ENCODE measurements at regions of chr22 and their contacts with region 1.

Region 1: GRCh38 chr22:43053176-43053575 is 36.0 kb downstream of the TTLL1 start:
- DNase-seq: no peak
- ATAC-seq: no peak
- H3K4me3 ChIP-seq: no peak overlapping the region
- H3K27ac ChIP-seq: no peak overlapping the region
- H3K4me1 ChIP-seq: no peaks in the 10 kb centered on the region
- H3K27me3 ChIP-seq: no peaks in the 10 kb centered on the region
- CTCF ChIP-seq: peak in 1 of 9 donors; percentile 16

Region 2: DNA sequence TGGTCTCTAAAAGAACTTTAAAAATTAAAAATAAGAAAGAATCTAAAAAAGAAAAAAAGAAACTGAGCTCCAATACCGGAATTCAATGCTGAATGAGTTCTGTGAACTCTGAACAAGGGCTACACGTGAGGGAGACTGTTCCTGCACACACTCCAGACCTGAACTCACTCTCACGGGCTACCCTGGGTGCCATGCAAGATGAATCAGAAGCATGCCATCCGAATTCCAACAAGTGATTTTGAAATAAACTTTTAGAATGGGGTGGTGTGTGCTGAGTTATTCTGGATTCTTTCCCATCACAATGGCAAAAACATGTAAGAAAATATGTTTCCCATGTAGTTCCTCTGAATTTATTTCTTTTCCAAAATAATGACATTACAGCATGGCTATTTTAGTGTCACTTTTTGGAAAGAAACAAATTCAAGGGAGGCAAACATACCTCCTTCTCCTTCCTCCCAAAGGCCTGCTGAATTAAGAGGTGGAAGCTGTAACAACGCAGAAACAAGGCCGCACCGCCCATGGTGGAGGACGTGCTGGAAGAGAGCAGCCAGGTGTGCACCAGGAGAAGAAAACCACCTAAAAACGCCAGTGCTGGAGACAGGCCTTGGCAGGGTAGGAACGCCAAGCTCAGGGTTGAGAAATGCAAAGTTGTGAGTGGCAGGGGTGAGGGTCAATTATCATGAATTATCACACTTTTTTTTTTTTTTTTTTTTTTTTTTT is 132.9 kb before region 1 on chr22:
- intact Hi-C with region 1: no loop called
- DNase-seq: no peak
- ATAC-seq: peak in 3 of 8 donors; percentile 36 to 49 (median 47)
- H3K4me3 ChIP-seq: no peak overlapping the region
- H3K27ac ChIP-seq: peak overlapping the region in 5 of 10 donors; percentile 9 to 51 (median 47)
- H3K4me1 ChIP-seq: peaks cover 13 to 89% (median 66%) of the 10 kb centered on the region in 9 donors
- H3K27me3 ChIP-seq: no peaks in the 10 kb centered on the region
- CTCF ChIP-seq: no peak

Region 3: DNA sequence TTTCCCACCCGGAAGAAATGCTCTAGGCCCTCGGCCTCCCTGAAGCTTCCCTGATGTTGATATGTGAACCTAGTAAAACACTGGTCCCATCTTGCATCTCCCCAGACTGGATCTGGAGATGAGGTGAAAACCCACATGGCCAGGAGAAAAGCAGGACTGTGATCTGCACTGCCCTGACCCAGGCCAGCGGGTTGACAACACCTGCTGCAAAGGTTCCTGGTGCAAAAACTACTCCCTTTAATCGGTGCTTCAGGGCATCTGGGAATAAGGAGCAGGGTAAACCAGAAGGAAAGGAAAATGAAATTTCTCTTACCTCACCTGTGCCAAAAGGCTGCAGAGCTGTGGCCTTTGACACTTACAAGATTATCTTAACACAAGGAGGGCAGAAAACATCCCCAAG is 68.8 kb before region 1 on chr22:
- intact Hi-C with region 1: no loop called
- DNase-seq: no peak
- ATAC-seq: no peak
- H3K4me3 ChIP-seq: no peak overlapping the region
- H3K27ac ChIP-seq: no peak overlapping the region
- H3K4me1 ChIP-seq: peaks cover 0 to 24% (median 2%) of the 10 kb centered on the region in 9 donors
- H3K27me3 ChIP-seq: no peaks in the 10 kb centered on the region
- CTCF ChIP-seq: no peak

Region 4: GRCh38 chr22:42994881-42995562 is 58.2 kb before region 1 on chr22:
- intact Hi-C with region 1: loop called in 1 of 10 experiments (anchors 10 kb)
- DNase-seq: peak in 1 of 2 donors; percentile 34
- ATAC-seq: peak; percentile 67 to 82 (median 76)
- H3K4me3 ChIP-seq: peak overlapping the region in 4 of 10 donors; percentile 6 to 35 (median 18)
- H3K27ac ChIP-seq: peak overlapping the region in 9 of 10 donors; percentile 46 to 91 (median 64)
- H3K4me1 ChIP-seq: peaks cover 4 to 85% (median 54%) of the 10 kb centered on the region in 9 donors
- H3K27me3 ChIP-seq: no peaks in the 10 kb centered on the region
- CTCF ChIP-seq: peak in 1 of 9 donors; percentile 5

Region 5: DNA sequence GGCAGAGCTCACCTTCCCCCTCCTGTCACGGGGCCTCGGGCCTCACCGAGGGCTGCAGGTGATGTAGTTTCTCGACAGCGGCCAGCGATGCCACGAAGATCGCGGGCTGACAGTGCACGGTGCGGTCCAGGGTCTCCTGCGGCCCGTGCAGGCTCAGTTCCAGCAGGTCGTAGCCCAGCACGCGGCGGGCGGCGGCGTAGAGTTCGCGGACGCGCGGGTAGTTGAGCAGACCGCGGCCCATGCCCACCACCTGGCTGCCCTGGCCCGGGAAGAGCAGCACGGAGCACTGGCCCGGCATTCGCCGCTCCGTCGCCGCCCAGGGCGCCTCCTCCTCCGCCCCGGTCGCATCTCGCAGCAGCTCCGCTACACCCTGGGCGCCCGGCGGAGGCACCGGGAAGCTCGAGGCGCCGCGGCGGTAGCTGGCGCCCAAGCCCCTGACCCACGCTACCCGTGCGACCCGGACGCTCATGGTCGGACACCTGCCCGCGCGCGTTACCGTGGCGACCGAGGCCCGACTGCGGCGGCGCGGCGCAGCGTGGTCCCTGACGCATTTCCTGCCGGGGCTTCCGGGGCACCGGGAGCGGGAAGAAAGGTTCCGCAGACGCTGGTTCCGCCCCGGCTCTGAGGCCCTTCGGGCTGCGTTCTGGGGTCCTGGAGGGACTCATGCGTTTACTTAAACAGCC is 89.8 kb after region 1 on chr22 and contains the start of gene MCAT:
- intact Hi-C with region 1: no loop called
- DNase-seq: peak; percentile 82 to 86
- ATAC-seq: peak; percentile 92 to 96 (median 94)
- H3K4me3 ChIP-seq: peak within 1 kb of the TSS; percentile 80 to 100 (median 96)
- H3K27ac ChIP-seq: peak within 1 kb of the TSS in 9 of 10 donors; percentile 50 to 91 (median 71)
- H3K4me1 ChIP-seq: peaks cover 7 to 34% (median 19%) of the 10 kb centered on the region in 9 donors
- H3K27me3 ChIP-seq: no peaks in the 10 kb centered on the region
- CTCF ChIP-seq: no peak
- total RNA-seq, gene MCAT: 12.8 to 18.2 (median 15.2) TPM

Measured in heart right ventricle (tissue), 16 donors.